A549 (cell line): ENCODE measurements at regions of chr2 and their contacts with region 1.

Region 1: DNA sequence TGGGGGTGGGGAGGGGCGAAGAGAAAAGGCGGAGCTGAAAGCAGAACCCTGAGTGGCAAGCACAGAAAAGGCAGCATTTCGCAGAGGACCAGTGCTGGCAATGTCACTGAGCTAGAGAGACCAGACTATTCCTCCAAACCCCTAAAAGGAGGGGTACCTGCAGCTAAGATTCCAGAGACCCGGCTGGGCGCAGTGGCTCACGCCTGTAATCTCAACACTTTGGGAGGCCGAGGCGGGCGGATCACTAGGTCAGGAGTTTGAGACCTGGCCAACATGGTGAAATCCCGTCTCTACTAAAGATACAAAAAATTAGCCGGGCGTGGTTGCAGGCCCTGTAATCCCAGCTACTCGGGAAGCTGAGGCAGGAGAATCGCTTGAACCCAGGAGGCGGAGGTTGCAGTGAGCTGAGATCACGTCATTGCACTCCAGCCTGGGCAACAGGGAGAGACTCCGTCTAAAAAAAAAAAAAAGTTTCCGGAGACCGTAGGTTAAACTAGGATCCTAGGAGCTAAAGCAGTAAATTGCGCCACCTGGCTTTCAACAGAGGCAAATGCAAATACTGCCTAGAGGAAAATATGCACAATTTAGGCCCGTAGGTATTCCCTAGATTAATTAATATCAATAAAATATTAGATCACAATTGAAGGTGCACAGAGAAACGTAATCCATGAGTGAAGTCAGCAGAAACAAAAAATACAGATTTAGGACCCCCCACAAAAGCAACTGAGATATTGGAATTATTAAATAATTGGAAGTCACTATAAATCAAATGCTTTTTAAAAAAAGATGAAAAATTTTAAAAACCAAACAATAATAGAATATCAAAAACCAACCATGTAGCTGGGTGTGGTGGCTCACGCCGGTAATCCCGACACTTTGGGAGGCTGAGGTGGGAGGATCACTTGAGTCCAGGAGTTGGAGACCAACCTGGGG is 4.9 kb downstream of the UCN start:
- DNase-seq: peak; percentile 80 to 86
- ATAC-seq: peak; percentile 47 to 85; a peak in 4 of 6 replicates
- H3K4me3 ChIP-seq: peak overlapping the region; percentile 37
- H3K27ac ChIP-seq: peak overlapping the region; percentile 60 to 83
- H3K4me1 ChIP-seq: 0 out of 3 replicates have a peak, but pooled peaks cover 3% of the 10 kb centered on the region
- CTCF ChIP-seq: peak; percentile 97
- EP300 ChIP-seq: no peak
- POLR2A ChIP-seq: no peak
- RAD21 ChIP-seq: peak; percentile 92

Region 2: DNA sequence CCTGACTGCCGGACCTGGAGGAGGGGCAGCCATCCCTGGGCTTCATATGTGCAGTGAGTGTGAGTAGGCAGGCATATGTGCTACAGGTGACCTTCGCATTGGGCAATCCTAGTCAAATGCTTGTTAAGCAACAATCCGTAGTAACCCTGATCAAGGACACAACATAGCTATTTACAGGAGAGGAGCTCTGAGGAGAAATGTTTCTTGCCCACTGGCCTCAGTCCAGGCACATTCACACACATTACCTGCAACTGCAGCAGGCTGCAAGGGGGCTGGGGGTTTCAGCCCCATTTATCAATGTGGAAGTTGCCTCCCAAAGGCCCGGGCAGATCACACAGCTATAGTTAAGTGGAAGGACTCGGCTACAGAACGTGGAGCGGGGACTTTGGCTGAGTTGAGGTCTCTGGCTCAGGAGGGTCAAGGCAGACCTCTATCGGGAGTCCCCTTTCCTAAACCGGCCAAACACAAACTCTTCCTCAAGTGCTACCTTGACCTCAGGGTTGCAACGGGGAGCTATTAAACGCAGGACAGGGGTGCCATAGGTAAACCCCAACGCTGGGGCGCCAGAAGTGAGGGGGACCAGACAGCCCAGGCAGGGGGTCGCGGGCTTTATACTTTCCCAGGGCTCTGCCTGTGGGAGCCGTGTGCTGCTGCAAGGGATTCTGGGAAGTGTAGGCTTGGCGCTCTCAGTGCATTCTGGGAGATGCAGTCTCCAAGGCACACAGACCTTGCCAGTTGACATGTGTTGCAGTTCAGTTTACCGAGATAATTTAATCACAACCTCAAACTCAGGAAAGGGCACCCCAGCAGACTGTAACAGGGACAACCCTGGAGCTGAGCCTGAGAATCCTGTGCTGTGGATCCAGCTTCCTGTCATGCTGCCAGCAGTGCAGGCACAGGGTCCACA is 207.4 kb before region 1 on chr2:
- CTCF ChIA-PET with region 1: interaction called, 156 read pairs
- POLR2A ChIA-PET with region 1: no interaction called
- DNase-seq: peak; percentile 56 to 80
- ATAC-seq: peak; percentile 67 to 85
- H3K4me3 ChIP-seq: no peak overlapping the region
- H3K27ac ChIP-seq: peak overlapping the region; percentile 46 to 71; a peak in 5 of 6 replicates
- H3K4me1 ChIP-seq: peaks cover 20% of the 10 kb centered on the region
- CTCF ChIP-seq: no peak
- EP300 ChIP-seq: no peak
- POLR2A ChIP-seq: no peak
- RAD21 ChIP-seq: no peak

Region 3: DNA sequence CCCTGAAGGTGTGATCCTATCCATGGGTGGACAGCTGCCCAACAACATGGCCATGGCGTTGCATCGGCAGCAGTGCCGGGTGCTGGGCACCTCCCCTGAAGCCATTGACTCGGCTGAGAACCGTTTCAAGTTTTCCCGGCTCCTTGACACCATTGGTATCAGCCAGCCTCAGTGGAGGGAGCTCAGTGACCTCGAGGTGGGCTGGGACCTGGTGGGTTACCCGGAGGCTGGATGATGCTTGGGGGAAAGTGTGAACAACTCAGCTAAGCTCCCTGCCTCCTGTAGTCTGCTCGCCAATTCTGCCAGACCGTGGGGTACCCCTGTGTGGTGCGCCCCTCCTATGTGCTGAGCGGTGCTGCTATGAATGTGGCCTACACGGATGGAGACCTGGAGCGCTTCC is 70.0 kb before region 1 on chr2:
- CTCF ChIA-PET with region 1: interaction called, 45 read pairs
- POLR2A ChIA-PET with region 1: no interaction called
- DNase-seq: no peak
- ATAC-seq: no peak
- H3K4me3 ChIP-seq: no peak overlapping the region
- H3K27ac ChIP-seq: no peak overlapping the region
- H3K4me1 ChIP-seq: no peaks in the 10 kb centered on the region
- CTCF ChIP-seq: no peak
- EP300 ChIP-seq: no peak
- POLR2A ChIP-seq: no peak
- RAD21 ChIP-seq: no peak

Region 4: GRCh38 chr2:27249891-27250651 is 53.3 kb before region 1 on chr2:
- CTCF ChIA-PET with region 1: interaction called, 37 read pairs
- POLR2A ChIA-PET with region 1: interaction called, 8 read pairs
- DNase-seq: peak; percentile 65 to 79
- ATAC-seq: peak; percentile 71 to 87
- H3K4me3 ChIP-seq: no peak overlapping the region
- H3K27ac ChIP-seq: peak overlapping the region; percentile 11 to 62; a peak in 3 of 6 replicates
- H3K4me1 ChIP-seq: peaks cover 15% of the 10 kb centered on the region
- CTCF ChIP-seq: peak; percentile 84
- EP300 ChIP-seq: no peak
- POLR2A ChIP-seq: no peak
- RAD21 ChIP-seq: peak; percentile 89 to 91

Region 5: GRCh38 chr2:27271631-27272340 is 31.6 kb before region 1 on chr2:
- CTCF ChIA-PET with region 1: interaction called, 394 read pairs
- POLR2A ChIA-PET with region 1: no interaction called
- DNase-seq: no peak
- ATAC-seq: peak; percentile 26 to 30; a peak in 2 of 6 replicates
- H3K4me3 ChIP-seq: no peak overlapping the region
- H3K27ac ChIP-seq: no peak overlapping the region
- H3K4me1 ChIP-seq: no peaks in the 10 kb centered on the region
- CTCF ChIP-seq: no peak
- EP300 ChIP-seq: no peak
- POLR2A ChIP-seq: no peak
- RAD21 ChIP-seq: no peak

Region 6: DNA sequence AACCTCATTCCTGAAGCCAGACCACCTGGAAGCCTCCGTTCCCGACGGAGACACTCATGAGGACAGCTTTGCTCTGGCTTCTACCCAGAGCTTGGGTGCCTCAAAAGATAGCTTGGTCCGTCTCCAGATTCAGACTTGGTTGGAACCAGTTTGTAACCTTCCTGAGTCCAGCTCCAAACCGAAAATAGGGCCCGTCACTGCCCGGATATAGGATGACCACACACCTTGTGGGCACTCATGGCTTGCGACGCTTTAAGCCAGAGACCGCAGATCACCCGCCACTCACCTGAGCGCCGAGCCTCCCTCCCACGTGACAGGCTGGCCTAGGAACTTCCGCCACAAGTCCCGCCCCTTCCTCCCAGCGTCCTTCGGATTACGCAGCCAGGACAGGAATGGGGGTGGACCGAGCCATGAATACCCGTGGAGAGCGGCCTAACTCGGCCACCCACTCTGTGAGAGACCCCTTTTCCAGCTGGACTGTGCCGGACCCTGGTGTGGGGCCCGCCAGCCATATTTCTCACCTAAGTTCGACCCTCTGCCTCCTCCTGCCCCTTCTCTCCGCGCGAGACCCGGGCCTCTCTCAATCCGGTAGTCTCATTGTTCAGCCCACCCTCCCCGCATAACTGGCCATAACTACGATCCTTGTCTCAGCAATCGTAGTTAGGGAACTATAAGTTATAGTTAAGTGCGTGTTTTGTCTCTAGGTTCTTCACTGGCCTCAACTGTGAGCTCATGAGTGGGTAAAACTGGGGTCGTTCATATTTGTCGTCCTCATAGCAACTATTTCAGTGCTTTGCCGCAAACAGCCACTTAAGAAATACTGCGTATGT is 19.6 kb after region 1 on chr2 and contains the start of gene MPV17:
- CTCF ChIA-PET with region 1: interaction called, 171 read pairs
- POLR2A ChIA-PET with region 1: interaction called, 4 read pairs
- DNase-seq: peak; percentile 95 to 99
- ATAC-seq: peak; percentile 82 to 90
- H3K4me3 ChIP-seq: peak within 1 kb of the TSS; percentile 58
- H3K27ac ChIP-seq: peak within 1 kb of the TSS; percentile 93 to 99
- H3K4me1 ChIP-seq: peaks cover 31% of the 10 kb centered on the region
- CTCF ChIP-seq: no peak
- EP300 ChIP-seq: no peak
- POLR2A ChIP-seq: peak; percentile 95
- RAD21 ChIP-seq: no peak
- polyA plus RNA-seq, gene MPV17: 130 and 157 TPM in 2 replicates